Caco-2 (cell line): ENCODE measurements at regions of chr10 and their contacts with region 1.

Region 1: DNA sequence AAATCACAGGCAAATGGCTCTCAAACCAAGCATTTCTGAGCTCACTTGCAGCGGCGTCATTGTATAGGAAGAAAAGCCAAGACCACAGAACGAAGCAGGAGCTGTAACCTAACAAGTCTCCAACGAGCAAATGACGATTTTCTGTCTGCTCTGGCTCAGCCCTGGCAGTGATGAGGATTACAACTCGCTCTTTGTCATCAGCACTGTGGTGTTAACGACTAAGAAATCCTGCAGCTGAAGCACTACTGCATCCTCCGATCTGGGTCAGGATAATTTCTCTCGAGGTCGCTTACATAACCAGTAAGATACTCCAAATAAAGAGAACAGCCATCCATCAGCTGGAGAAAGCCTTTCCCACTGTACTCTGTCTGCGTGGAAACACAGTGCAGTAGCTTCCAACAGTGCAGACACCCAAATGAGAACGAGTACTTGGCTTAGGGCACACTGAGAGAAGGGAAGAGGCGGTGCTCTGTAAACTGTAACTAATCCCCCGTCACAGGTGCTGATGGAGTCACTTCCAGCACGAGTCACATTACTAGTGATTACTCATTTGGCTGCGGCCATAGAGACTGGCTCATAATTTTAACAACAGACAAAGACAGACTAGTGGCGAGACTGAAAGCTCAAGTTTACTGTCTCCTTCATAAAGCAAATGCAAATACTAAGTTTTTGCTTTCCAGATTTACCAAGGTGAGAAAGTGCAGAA is 135.8 kb downstream of the NRBF2 start:
- DNase-seq: peak; percentile 90
- H3K4me3 ChIP-seq: peak overlapping the region; percentile 54
- H3K4me3 Mint-ChIP-seq: peak overlapping the region; percentile 97
- H3K27ac Mint-ChIP-seq: peak overlapping the region; percentile 98
- H3K4me1 ChIP-seq: peaks cover 19% of the 10 kb centered on the region
- H3K4me1 Mint-ChIP-seq: peaks cover 28% of the 10 kb centered on the region
- H3K27me3 ChIP-seq: no peaks in the 10 kb centered on the region
- H3K27me3 Mint-ChIP-seq: no peaks in the 10 kb centered on the region
- CTCF ChIP-seq: peak; percentile 39 to 51

Region 2: GRCh38 chr10:62414359-62414758 is 854.6 kb before region 1 on chr10:
- CTCF ChIA-PET with region 1: no interaction called
- POLR2A ChIA-PET with region 1: no interaction called
- intact Hi-C with region 1: no loop called
- DNase-seq: no peak
- H3K4me3 ChIP-seq: no peak overlapping the region
- H3K4me3 Mint-ChIP-seq: no peak overlapping the region
- H3K27ac Mint-ChIP-seq: no peak overlapping the region
- H3K4me1 ChIP-seq: no peaks in the 10 kb centered on the region
- H3K4me1 Mint-ChIP-seq: no peaks in the 10 kb centered on the region
- H3K27me3 ChIP-seq: 0 out of 2 replicates have a peak, but pooled peaks cover 2% of the 10 kb centered on the region
- H3K27me3 Mint-ChIP-seq: peaks cover 32% of the 10 kb centered on the region
- CTCF ChIP-seq: no peak

Region 3: GRCh38 chr10:63133056-63133820 is 135.7 kb before region 1 on chr10 and contains the start of gene NRBF2:
- CTCF ChIA-PET with region 1: no interaction called
- POLR2A ChIA-PET with region 1: no interaction called
- intact Hi-C with region 1: loop called (anchors 1 kb)
- DNase-seq: peak; percentile 100
- H3K4me3 ChIP-seq: peak within 1 kb of the TSS; percentile 60
- H3K4me3 Mint-ChIP-seq: peak within 1 kb of the TSS; percentile 94
- H3K27ac Mint-ChIP-seq: peak within 1 kb of the TSS; percentile 91
- H3K4me1 ChIP-seq: peaks cover 14% of the 10 kb centered on the region
- H3K4me1 Mint-ChIP-seq: peaks cover 35% of the 10 kb centered on the region
- H3K27me3 ChIP-seq: no peaks in the 10 kb centered on the region
- H3K27me3 Mint-ChIP-seq: no peaks in the 10 kb centered on the region
- CTCF ChIP-seq: peak; percentile 32 to 71
- total RNA-seq, gene NRBF2: 49.1 and 52.5 TPM in 2 replicates

Region 4: DNA sequence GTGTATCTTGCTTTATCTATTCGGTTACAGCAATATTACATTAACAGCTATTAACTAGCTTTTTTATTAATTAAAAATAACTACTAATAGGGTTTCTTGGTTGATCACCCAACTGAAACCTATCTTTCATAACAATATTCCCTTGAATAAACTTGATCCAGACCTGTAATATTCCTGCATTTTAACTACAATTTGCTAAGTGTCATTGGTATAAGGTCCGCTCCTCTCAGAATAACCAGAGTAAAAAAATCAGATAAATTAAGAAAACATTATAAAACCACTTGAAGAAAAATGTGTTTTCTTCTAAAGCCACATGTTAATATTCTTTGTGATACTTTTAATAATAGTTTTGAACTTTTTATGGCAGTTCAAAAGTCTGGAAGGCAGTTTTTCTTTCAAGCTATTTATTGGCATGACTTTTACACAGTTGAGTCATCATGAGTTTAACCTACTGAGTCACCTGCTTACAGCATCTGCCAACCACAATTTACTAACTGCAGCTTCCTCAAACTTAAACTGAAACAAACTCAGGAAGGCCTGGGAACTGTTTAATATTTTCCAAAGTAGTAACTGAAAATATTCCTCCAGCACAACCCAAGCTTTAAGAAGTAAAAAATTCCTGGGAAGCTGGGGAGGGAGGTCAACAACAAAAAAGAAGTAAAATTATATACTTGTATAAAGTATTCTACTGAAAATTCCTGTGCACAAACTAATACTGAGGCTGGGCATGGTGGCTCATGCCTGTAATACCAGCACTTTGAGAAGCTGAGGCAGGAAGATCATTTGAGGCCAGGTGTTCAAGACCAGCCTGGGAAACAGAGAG is 32.6 kb before region 1 on chr10:
- CTCF ChIA-PET with region 1: no interaction called
- POLR2A ChIA-PET with region 1: interaction called, 6 read pairs
- intact Hi-C with region 1: loop called (anchors 1 kb)
- DNase-seq: peak in 1 of 2 experiments; percentile 39
- H3K4me3 ChIP-seq: no peak overlapping the region
- H3K4me3 Mint-ChIP-seq: no peak overlapping the region
- H3K27ac Mint-ChIP-seq: no peak overlapping the region
- H3K4me1 ChIP-seq: peaks cover 33% of the 10 kb centered on the region
- H3K4me1 Mint-ChIP-seq: peaks cover 15% of the 10 kb centered on the region
- H3K27me3 ChIP-seq: no peaks in the 10 kb centered on the region
- H3K27me3 Mint-ChIP-seq: no peaks in the 10 kb centered on the region
- CTCF ChIP-seq: no peak

Region 5: GRCh38 chr10:63465293-63466143 is 196.6 kb after region 1 on chr10 and contains the start of gene JMJD1C:
- CTCF ChIA-PET with region 1: no interaction called
- POLR2A ChIA-PET with region 1: interaction called, 3 read pairs
- intact Hi-C with region 1: loop called (anchors 2 kb)
- DNase-seq: peak; percentile 89 to 95
- H3K4me3 ChIP-seq: peak within 1 kb of the TSS; percentile 96
- H3K4me3 Mint-ChIP-seq: peak within 1 kb of the TSS; percentile 100
- H3K27ac Mint-ChIP-seq: peak within 1 kb of the TSS; percentile 100
- H3K4me1 ChIP-seq: 0 out of 2 replicates have a peak, but pooled peaks cover 11% of the 10 kb centered on the region
- H3K4me1 Mint-ChIP-seq: peaks cover 44% of the 10 kb centered on the region
- H3K27me3 ChIP-seq: no peaks in the 10 kb centered on the region
- H3K27me3 Mint-ChIP-seq: no peaks in the 10 kb centered on the region
- CTCF ChIP-seq: peak in 1 of 2 experiments; percentile 6
- total RNA-seq, gene JMJD1C: 89.7 and 95.7 TPM in 2 replicates

Region 6: GRCh38 chr10:63586043-63586442 is 317.1 kb after region 1 on chr10:
- CTCF ChIA-PET with region 1: no interaction called
- POLR2A ChIA-PET with region 1: interaction called, 15 read pairs
- intact Hi-C with region 1: no loop called
- DNase-seq: no peak
- H3K4me3 ChIP-seq: no peak overlapping the region
- H3K4me3 Mint-ChIP-seq: no peak overlapping the region
- H3K27ac Mint-ChIP-seq: no peak overlapping the region
- H3K4me1 ChIP-seq: peaks cover 9% of the 10 kb centered on the region
- H3K4me1 Mint-ChIP-seq: no peaks in the 10 kb centered on the region
- H3K27me3 ChIP-seq: no peaks in the 10 kb centered on the region
- H3K27me3 Mint-ChIP-seq: no peaks in the 10 kb centered on the region
- CTCF ChIP-seq: no peak